GM12878 (cell line): ENCODE measurements at regions of chr9 and their contacts with region 1.

Region 1: GRCh38 chr9:78115073-78115472 is 83.5 kb upstream of the GNAQ start:
- DNase-seq: no peak
- ATAC-seq: peak; percentile 39; the same call in 2 of the 3 replicates
- H3K4me3 ChIP-seq: no peak overlapping the region
- H3K27ac ChIP-seq: no peak overlapping the region
- H3K4me1 ChIP-seq: peaks cover 7% of the 10 kb centered on the region; the same call in 1 of the 2 replicates
- H3K27me3 ChIP-seq: no peaks in the 10 kb centered on the region
- CTCF ChIP-seq: peak; percentile 19 to 55 (median 43); a peak in 3 of 6 replicates
- EP300 ChIP-seq: no peak
- POLR2A ChIP-seq: no peak
- RAD21 ChIP-seq: peak; percentile 52

Region 2: GRCh38 chr9:78103971-78104433 is 11.1 kb before region 1 on chr9:
- CTCF ChIA-PET with region 1: interaction called, 10 read pairs
- POLR2A ChIA-PET with region 1: no interaction called
- RAD21 ChIA-PET with region 1: interaction called, 3 read pairs
- SMC1A ChIA-PET with region 1: interaction called, 9 read pairs
- in situ Hi-C with region 1: no loop called
- intact Hi-C with region 1: no loop called
- DNase-seq: no peak
- ATAC-seq: peak; percentile 81
- H3K4me3 ChIP-seq: no peak overlapping the region
- H3K27ac ChIP-seq: no peak overlapping the region
- H3K4me1 ChIP-seq: no peaks in the 10 kb centered on the region
- H3K27me3 ChIP-seq: no peaks in the 10 kb centered on the region
- CTCF ChIP-seq: no peak
- EP300 ChIP-seq: no peak
- POLR2A ChIP-seq: no peak
- RAD21 ChIP-seq: no peak

Region 3: DNA sequence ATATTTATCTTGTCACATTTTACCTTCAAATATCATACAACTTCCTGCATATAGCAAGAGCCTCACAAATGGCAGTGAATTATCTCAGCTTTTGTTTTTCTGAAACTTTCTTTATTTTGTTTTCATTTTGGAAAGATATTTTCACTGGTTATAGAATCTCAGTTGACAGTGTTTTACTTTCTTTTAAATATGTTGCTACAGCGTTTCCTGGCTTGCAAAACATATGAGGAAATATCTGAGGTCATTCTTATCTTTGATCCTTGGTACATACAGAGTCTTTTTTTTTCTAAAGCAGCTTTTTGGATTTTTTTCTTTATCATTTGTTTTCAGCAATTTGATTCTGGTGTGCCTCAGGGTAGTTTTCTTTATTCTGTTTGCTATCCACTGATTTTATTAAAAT is 43.2 kb after region 1 on chr9:
- CTCF ChIA-PET with region 1: no interaction called
- POLR2A ChIA-PET with region 1: no interaction called
- RAD21 ChIA-PET with region 1: no interaction called
- SMC1A ChIA-PET with region 1: no interaction called
- in situ Hi-C with region 1: no loop called
- intact Hi-C with region 1: no loop called
- DNase-seq: no peak
- ATAC-seq: no peak
- H3K4me3 ChIP-seq: no peak overlapping the region
- H3K27ac ChIP-seq: no peak overlapping the region
- H3K4me1 ChIP-seq: no peaks in the 10 kb centered on the region
- H3K27me3 ChIP-seq: no peaks in the 10 kb centered on the region
- CTCF ChIP-seq: no peak
- EP300 ChIP-seq: no peak
- POLR2A ChIP-seq: no peak
- RAD21 ChIP-seq: no peak

Region 4: GRCh38 chr9:78826527-78826926 is 711.5 kb after region 1 on chr9:
- CTCF ChIA-PET with region 1: no interaction called
- POLR2A ChIA-PET with region 1: no interaction called
- RAD21 ChIA-PET with region 1: no interaction called
- SMC1A ChIA-PET with region 1: no interaction called
- in situ Hi-C with region 1: no loop called
- intact Hi-C with region 1: no loop called
- DNase-seq: no peak
- ATAC-seq: no peak
- H3K4me3 ChIP-seq: no peak overlapping the region
- H3K27ac ChIP-seq: no peak overlapping the region
- H3K4me1 ChIP-seq: no peaks in the 10 kb centered on the region
- H3K27me3 ChIP-seq: no peaks in the 10 kb centered on the region
- CTCF ChIP-seq: no peak
- EP300 ChIP-seq: no peak
- POLR2A ChIP-seq: no peak
- RAD21 ChIP-seq: no peak

Region 5: DNA sequence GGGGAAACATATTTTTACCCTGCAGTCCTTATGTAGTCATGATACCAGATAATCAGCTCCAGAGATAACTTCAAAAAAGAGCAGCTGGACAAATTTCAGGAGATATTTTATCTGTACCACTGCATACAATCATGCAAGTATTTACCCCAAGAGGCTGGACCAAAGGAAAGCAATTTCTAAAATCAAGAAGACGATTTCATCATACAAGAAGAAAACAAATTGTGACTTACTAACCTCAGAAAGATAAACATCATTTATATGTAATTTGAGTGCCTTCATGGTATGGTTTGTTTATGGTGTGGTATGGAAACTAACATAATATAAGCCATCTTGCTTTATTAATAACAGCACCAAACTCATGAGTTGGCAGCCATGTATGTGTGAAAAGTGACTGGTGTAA is 785.4 kb after region 1 on chr9:
- CTCF ChIA-PET with region 1: no interaction called
- POLR2A ChIA-PET with region 1: no interaction called
- RAD21 ChIA-PET with region 1: no interaction called
- SMC1A ChIA-PET with region 1: no interaction called
- in situ Hi-C with region 1: no loop called
- intact Hi-C with region 1: no loop called
- DNase-seq: no peak
- ATAC-seq: no peak
- H3K4me3 ChIP-seq: no peak overlapping the region
- H3K27ac ChIP-seq: no peak overlapping the region
- H3K4me1 ChIP-seq: no peaks in the 10 kb centered on the region
- H3K27me3 ChIP-seq: no peaks in the 10 kb centered on the region
- CTCF ChIP-seq: no peak
- EP300 ChIP-seq: no peak
- POLR2A ChIP-seq: no peak
- RAD21 ChIP-seq: no peak